Activated CD8-positive, alpha-beta T cell treated with anti-CD3 and anti-CD28 coated beads for 36 hours (primary cell): ENCODE measurements at regions of chr6 and their contacts with region 1.

Region 1: DNA sequence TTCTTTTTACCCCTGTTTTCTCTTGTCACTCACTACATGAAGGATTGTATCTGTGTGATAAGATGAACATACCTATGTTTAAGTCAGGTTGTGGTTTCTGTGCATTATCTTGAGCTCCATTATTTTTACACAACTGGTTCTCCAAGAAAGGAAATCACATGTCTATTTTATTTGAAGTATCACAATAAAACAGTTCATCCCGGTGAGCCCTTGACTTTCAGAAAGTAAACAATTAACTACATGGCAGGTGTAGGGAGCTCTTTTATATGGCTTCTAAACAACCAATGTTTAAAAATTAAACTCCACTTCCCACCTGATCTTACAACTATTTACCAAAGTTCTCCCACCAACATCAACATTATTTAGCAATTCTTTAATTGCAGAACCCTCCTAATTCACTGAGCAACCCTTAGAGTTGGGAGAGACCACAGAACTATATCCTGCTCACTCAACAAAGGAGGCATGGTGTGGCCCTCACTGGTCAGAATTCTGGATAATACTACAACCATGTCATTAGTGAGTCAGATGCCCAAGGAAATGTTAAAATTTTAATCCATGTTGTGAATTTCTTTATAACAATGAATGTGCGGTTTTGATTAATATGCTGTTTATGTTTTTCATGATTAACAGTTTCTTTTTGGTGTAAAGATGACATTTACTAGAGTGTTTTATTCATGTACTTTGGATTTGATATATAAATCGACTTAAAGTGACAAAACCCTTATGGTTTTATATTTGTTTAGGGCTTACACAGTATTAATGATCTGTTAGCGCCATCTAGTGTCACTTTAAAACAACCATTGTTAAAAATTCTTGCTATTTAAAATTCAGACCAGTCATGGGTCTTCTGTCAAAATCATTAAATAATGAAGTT is 50.0 kb upstream of the SCGN start:
- DNase-seq: no peak
- ATAC-seq: no peak
- H3K4me3 Mint-ChIP-seq: no peak overlapping the region
- H3K27ac Mint-ChIP-seq: no peak overlapping the region
- H3K4me1 Mint-ChIP-seq: peaks cover 5% of the 10 kb centered on the region
- H3K27me3 Mint-ChIP-seq: no peaks in the 10 kb centered on the region
- CTCF ChIP-seq: peak; percentile 79

Region 2: GRCh38 chr6:25612666-25613065 is 10.6 kb after region 1 on chr6:
- CTCF ChIA-PET with region 1: interaction called, 11 read pairs
- POLR2A ChIA-PET with region 1: no interaction called
- intact Hi-C with region 1: no loop called
- DNase-seq: no peak
- ATAC-seq: no peak
- H3K4me3 Mint-ChIP-seq: no peak overlapping the region
- H3K27ac Mint-ChIP-seq: no peak overlapping the region
- H3K4me1 Mint-ChIP-seq: no peaks in the 10 kb centered on the region
- H3K27me3 Mint-ChIP-seq: no peaks in the 10 kb centered on the region
- CTCF ChIP-seq: no peak

Region 3: DNA sequence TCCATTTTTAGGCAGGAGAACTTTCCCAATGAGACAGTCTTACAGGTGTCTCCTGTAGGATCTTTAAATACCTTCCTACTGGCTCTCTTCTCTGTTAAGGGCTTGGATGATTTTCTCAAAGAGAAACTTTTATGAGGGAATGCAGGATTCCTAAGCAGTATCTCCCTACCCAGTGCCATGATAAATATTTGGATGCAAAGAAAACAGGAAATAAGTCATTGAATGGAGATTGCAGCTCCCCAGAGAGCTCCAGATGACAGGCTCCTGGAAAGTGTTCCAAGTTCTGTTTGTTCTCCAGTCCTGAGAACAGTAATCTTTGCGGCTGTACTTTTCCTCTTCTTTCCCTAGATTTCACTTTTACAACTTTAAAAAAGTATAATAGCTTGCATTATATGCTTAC is 47.6 kb after region 1 on chr6:
- CTCF ChIA-PET with region 1: no interaction called
- POLR2A ChIA-PET with region 1: no interaction called
- intact Hi-C with region 1: no loop called
- DNase-seq: no peak
- ATAC-seq: no peak
- H3K4me3 Mint-ChIP-seq: no peak overlapping the region
- H3K27ac Mint-ChIP-seq: no peak overlapping the region
- H3K4me1 Mint-ChIP-seq: no peaks in the 10 kb centered on the region
- H3K27me3 Mint-ChIP-seq: peaks cover 49% of the 10 kb centered on the region
- CTCF ChIP-seq: no peak